Activated CD8-positive, alpha-beta T cell treated with anti-CD3 and anti-CD28 coated beads for 36 hours (primary cell): ENCODE measurements at regions of chr6 and their contacts with region 1.

Region 1: DNA sequence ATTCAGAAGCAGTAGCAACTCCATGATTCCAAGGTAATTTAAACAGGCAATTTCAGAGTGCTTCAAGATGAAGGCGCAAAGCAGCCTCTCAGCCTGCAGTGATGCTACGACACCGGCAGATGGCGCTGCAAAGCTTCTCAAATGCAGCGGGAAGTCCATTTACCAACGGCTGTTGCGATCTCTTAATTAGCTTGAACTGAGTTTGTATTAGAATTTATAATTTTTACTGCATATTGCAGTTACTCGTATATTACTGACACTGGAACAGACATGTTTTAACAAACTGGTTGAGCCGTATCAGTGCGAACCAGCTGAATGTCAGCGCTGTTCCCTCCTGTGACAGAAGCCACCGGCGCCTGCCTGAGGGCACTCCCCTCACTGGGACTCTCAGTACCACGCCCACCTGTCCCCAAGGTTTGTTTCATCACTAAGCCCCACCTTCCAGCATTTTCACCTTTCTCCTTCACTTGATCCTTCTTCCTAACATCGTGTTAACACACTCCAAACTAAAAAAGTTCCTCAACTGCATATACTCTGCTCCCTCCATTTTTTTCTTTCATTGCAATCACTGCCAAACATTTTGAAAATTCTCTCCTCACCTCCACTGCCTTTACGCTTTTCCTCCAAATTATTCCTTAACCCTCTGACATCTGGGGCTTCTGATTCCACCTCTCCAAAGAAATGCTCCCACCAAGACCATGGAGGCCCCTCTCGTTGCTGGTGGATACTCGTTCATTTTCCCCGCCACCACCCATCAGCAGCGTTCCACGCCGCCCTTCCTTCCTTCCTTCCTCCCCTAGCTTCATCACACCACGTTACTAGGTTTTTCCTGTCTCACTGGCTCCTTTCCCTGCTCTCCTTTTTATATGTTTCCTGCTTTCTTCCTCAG is 14.5 kb downstream of the GNL1 start:
- DNase-seq: peak; percentile 85
- ATAC-seq: peak; percentile 75
- H3K4me3 Mint-ChIP-seq: peak overlapping the region; percentile 71
- H3K27ac Mint-ChIP-seq: peak overlapping the region; percentile 77
- H3K4me1 Mint-ChIP-seq: peaks cover 36% of the 10 kb centered on the region
- H3K27me3 Mint-ChIP-seq: no peaks in the 10 kb centered on the region
- CTCF ChIP-seq: peak; percentile 98

Region 2: DNA sequence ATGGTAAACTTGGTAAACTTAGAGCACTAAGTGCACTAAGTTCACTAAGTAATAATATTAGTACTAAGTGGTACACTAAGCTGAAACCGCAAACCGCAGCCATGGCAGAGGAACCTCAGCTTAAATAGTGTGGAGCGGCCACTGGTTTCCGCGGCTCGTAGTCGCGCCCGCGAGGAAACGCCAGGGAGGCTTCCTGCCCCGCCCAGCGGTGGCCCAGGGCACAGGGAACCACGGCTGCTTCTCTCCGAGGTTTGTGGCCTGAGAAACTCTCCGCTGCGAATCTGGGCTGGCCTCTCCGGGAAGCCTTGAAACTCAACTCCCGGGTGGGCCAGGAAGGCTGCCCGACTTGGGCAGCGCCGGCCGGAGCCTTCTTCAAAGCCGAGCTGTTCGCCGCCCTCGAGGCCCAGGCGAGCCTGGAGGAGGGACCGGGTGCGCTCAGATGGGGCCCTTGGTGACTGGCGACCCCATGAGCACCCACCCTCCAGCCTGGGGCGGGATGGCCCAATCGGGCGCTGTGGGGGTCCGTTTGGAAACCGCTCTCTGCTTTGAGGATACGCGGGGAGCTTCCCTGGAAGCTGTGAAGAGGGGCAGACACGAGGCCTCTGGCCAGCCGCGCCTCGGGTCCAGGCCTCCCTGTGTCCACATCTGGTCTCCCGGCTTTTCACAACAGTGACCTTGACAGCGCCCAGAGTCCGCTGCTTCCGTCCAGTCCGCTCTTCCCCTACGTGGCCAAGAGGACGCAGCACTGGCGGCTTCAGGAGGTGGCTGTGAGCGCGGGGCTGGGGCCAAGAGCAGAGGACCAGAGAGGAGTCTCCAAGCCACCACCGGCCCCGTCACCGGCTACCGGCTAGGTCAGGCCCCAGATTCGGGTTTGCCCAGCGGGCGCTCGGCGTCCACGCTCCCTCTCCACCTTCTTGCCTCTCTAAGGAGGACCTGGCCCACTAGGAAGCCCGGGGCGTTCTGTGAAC is 77.8 kb before region 1 on chr6:
- CTCF ChIA-PET with region 1: interaction called, 18 read pairs
- POLR2A ChIA-PET with region 1: interaction called, 3 read pairs
- intact Hi-C with region 1: no loop called
- DNase-seq: peak; percentile 78
- ATAC-seq: peak; percentile 64
- H3K4me3 Mint-ChIP-seq: no peak overlapping the region
- H3K27ac Mint-ChIP-seq: no peak overlapping the region
- H3K4me1 Mint-ChIP-seq: peaks cover 20% of the 10 kb centered on the region
- H3K27me3 Mint-ChIP-seq: peaks cover 86% of the 10 kb centered on the region
- CTCF ChIP-seq: no peak

Region 3: DNA sequence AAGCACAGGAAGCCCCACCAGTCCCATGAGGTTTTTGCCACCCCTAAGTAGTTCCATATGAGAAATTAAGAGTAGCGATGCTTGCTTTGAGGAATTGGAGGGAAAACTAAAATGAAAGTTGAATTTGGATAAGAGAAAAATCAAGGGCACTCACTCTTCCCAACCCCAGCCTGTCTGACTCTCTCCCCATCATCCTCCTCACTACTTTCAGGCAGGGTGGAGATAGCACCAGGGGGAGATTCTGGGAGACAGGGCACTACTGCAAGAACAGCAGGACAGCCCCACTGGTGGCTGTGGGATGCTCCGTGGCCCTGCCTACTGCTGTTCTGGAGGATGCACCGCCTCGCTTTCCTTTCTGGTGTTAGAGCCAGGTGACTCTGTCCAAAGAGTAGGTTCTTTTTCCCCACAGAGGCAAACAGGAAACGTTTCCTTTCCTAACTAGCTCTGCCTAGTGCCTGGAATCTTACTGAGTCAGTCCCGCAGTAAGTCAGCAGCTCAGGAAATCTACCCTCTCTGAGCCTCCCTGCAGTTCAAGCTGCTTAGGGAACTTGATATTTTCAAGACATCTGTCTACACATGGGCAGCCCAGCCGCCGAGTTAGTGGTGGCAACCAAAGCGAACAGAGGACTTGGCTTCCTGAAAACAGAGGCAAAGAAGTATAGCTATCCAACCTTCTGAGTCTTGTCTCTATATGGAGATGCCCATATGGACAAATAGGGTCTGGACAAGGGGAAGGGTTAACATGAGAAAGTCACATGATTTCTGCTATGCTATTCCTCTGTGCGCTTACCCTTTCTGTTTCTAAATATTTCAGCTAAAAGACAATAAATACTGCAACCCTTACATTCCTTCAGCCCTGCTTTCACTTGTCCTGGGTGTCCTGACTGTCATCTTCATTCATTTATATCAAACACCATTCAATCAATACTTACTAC is 41.1 kb before region 1 on chr6:
- CTCF ChIA-PET with region 1: interaction called, 28 read pairs
- POLR2A ChIA-PET with region 1: interaction called, 11 read pairs
- intact Hi-C with region 1: no loop called
- DNase-seq: no peak
- ATAC-seq: peak; percentile 32
- H3K4me3 Mint-ChIP-seq: peak overlapping the region; percentile 67
- H3K27ac Mint-ChIP-seq: peak overlapping the region; percentile 79
- H3K4me1 Mint-ChIP-seq: peaks cover 46% of the 10 kb centered on the region
- H3K27me3 Mint-ChIP-seq: no peaks in the 10 kb centered on the region
- CTCF ChIP-seq: no peak

Region 4: DNA sequence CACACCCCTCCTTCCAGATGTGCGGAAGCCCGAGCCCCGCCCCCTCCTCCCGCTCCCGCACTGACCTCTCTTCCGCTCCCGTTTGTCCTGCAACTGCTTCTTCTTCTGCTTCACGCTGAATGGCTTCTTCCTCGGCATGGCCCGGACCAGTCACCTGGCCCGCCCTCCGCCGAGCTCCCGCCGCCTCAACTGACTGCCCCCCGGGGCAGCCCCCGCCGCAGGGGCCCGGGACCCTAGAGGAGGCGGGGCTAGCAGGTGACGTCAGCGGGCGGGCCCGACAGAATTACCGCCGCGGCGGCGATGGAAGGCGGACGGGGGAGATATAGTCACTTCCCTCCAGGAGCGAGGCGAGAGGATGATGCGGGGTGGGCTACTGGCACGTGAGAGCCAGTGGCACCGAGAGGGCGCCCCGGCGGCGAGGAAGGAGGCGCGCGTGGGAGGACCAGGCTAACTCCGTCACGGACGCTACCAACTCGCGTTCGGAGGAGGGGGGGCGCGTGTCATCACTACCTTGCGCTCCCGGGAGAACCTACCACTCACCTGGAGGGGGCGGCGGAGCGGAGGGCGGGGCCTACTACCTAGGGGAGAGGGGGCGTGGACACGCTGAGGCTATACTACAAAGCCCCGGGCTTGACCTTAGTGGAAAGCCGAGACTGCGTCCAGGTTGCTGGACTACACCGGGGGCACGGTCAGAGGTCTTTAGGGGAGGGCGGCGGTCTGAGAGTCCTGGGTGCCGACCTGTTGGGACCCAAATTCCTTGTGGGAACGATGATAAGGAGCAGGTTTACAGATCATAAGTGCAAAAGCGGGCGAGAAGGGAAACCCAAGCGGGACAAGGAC is 14.5 kb after region 1 on chr6 and contains the start of gene GNL1:
- CTCF ChIA-PET with region 1: interaction called, 96 read pairs
- POLR2A ChIA-PET with region 1: interaction called, 55 read pairs
- intact Hi-C with region 1: no loop called
- DNase-seq: peak; percentile 100
- ATAC-seq: peak; percentile 93
- H3K4me3 Mint-ChIP-seq: peak within 1 kb of the TSS; percentile 91
- H3K27ac Mint-ChIP-seq: peak within 1 kb of the TSS; percentile 99
- H3K4me1 Mint-ChIP-seq: peaks cover 35% of the 10 kb centered on the region
- H3K27me3 Mint-ChIP-seq: no peaks in the 10 kb centered on the region
- CTCF ChIP-seq: no peak
- total RNA-seq, gene GNL1: 107 to 122 TPM

Region 5: DNA sequence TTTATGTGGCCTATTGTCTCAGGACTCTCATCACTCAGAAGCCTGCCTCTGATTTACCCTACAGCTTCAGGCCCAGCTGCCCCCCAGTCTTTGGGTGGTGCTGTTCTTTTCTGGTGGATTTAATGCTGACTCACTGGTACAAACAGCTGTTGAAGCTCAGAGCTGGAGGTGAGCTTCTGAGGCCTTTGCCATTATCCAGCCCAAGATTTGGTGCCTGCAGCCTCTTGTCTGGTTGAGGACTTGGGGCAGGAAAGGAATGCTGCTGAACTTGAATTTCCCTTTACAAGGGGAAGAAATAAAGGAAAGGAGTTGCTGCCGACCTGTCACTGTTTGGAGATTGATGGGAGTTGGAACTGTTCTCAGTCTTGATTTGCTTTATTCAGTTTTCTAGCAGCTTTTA is 49.2 kb after region 1 on chr6:
- CTCF ChIA-PET with region 1: interaction called, 91 read pairs
- POLR2A ChIA-PET with region 1: interaction called, 4 read pairs
- intact Hi-C with region 1: loop called (anchors 2 kb)
- DNase-seq: no peak
- ATAC-seq: no peak
- H3K4me3 Mint-ChIP-seq: no peak overlapping the region
- H3K27ac Mint-ChIP-seq: peak overlapping the region; percentile 53
- H3K4me1 Mint-ChIP-seq: peaks cover 6% of the 10 kb centered on the region
- H3K27me3 Mint-ChIP-seq: no peaks in the 10 kb centered on the region
- CTCF ChIP-seq: no peak